MCF 10A (cell line): ENCODE measurements at regions of chr1 and their contacts with region 1.

Region 1: GRCh38 chr1:180791806-180792205 is 120.9 kb upstream of the KIAA1614 start:
- DNase-seq: peak; percentile 51
- H3K4me3 Mint-ChIP-seq: no peak overlapping the region
- H3K27ac Mint-ChIP-seq: no peak overlapping the region
- H3K4me1 Mint-ChIP-seq: peaks cover 23% of the 10 kb centered on the region
- H3K27me3 Mint-ChIP-seq: no peaks in the 10 kb centered on the region
- CTCF ChIP-seq: no peak

Region 2: GRCh38 chr1:180680558-180681144 is 111.2 kb before region 1 on chr1:
- CTCF ChIA-PET with region 1: no interaction called
- POLR2A ChIA-PET with region 1: no interaction called
- intact Hi-C with region 1: no loop called
- DNase-seq: peak; percentile 96
- H3K4me3 Mint-ChIP-seq: no peak overlapping the region
- H3K27ac Mint-ChIP-seq: peak overlapping the region; percentile 31
- H3K4me1 Mint-ChIP-seq: peaks cover 16% of the 10 kb centered on the region
- H3K27me3 Mint-ChIP-seq: no peaks in the 10 kb centered on the region
- CTCF ChIP-seq: no peak

Region 3: GRCh38 chr1:180778782-180779398 is 12.9 kb before region 1 on chr1:
- CTCF ChIA-PET with region 1: interaction called, 11 read pairs
- POLR2A ChIA-PET with region 1: interaction called, 13 read pairs
- intact Hi-C with region 1: no loop called
- DNase-seq: peak; percentile 59
- H3K4me3 Mint-ChIP-seq: no peak overlapping the region
- H3K27ac Mint-ChIP-seq: no peak overlapping the region
- H3K4me1 Mint-ChIP-seq: peaks cover 9% of the 10 kb centered on the region
- H3K27me3 Mint-ChIP-seq: no peaks in the 10 kb centered on the region
- CTCF ChIP-seq: peak; percentile 57

Region 4: DNA sequence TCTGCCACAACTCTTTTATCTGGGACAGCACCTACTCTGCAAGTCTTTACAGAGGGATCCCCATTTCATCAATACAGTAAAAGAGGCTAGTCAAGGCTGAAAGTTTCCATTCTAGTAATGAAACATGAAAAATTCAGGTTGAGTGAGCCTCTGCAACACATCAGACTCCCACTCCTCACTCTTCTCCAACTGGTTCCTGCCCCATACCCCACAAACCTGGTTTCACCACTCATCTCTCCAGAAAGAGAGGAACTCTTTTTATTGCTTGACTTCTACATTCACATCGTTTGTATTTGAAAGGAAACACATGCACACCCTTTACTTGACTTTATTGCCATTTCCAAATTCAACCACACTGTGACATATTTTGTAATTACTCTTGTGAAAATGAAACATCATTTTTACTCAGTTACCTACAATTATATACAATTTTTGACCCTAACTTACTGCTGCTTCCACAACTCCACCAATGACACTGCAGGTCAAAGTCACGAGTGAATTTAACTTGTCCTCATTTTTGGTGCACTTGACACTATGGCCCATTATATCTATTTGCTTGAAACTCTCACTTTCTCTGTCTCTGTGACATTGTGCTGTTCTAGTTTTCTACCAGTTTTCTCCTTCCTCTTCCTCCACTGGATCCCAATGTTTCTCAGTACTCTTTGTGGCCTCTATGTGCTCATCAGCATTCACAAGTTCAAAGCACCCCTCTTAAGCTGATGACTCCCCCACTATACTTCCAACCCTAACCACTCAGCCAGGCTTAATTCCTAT is 222.9 kb after region 1 on chr1:
- CTCF ChIA-PET with region 1: no interaction called
- POLR2A ChIA-PET with region 1: no interaction called
- intact Hi-C with region 1: no loop called
- DNase-seq: no peak
- H3K4me3 Mint-ChIP-seq: no peak overlapping the region
- H3K27ac Mint-ChIP-seq: no peak overlapping the region
- H3K4me1 Mint-ChIP-seq: peaks cover 40% of the 10 kb centered on the region
- H3K27me3 Mint-ChIP-seq: no peaks in the 10 kb centered on the region
- CTCF ChIP-seq: no peak